Tibial artery (tissue), 4 donors: ENCODE measurements at regions of chr6 and their contacts with region 1.

Region 1: DNA sequence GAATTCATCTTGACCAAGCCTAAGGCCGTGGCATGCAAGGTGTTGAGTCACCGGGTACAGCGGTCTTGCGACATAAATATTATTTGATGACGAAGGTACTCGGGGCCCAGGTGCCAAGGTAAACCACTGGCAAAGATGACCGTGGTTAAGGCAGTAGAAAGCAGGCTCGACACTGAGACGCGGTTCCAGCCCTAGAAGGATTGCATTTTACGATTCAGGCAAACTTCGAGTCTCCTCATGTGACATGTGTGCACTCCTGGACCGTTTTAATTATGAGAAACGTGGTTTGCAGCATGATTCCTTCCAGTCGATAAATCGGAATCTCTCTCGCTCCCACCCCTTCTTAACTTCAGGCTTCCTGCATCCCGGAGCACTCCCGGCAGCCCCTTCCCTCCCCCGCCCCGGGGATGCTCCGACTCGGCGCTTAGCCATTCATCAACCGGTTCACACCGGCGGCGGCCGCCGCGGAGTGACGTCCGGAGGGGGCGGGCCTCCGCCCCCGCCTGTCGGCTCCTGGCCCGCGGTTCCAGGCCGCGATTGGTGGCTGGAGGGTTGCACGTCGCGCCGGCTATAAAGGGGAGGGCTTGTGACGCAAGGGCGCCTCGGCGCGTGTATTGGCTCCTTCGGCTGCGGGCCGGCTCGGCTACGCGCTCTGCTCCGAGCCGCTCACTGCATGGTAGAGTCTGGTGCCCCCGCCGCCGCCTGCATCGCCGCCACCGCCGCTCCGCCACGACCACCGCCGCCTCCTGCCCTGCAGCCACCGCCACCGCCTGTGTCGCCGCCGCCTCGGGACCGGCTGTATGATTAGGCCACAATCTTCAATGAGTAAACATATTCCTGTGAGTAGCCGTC is at the starts of genes LOC128125822 and PTP4A1:
- DNase-seq: peak; percentile 96 to 98
- H3K4me3 ChIP-seq: peak within 1 kb of the TSS; percentile 96 to 100
- H3K27ac ChIP-seq: peak within 1 kb of the TSS; percentile 100
- H3K4me1 ChIP-seq: peaks cover 0 to 22% (median 9%) of the 10 kb centered on the region in 4 donors
- H3K27me3 ChIP-seq: no peaks in the 10 kb centered on the region
- CTCF ChIP-seq: no peak

Region 2: DNA sequence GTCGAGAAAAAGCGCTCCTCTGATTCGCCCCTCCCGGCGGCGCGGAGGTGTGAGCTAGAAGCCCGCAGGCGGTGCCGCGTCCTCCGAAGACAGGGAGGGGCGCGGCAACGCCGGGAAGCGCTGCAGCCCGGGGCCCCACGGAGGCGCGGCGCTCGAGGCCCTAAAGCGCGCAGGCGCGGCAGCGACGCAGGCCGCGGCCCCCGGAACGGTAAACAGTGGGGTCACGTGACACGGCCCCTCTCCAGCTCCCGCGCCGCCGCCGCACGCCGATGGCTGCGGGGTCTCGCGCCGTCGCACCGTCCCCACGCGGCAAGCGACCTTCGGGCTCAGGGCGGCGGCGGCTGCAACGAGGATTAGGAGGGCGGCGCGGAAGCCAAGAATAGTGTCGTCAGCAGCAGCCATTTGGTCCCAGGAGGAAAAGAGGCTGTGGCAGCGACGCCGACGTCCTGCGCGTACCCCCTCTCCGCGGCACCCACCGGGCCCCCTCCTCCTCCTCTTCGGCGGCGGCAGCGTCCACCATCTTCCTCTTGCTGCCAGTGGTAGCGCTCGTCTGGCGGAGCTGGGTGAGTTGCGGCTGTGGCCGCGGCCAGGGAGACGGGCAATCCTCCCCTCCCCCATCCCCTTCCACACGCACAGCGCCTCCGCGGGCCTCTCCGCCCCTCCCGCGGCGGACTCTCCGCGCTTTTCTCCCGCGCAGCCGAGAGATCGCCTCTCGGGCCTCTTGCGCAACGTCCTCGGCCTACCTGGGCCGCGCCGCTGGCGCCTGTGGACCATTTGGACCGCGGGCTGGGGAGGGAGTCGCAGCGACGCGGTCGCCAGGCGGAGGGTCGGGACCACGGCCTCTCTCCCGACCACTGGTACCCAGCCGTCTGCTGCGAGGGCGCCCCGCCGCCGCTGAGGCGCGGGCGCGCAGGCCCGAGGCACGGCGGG is 63.7 kb after region 1 on chr6 and contains the start of gene PHF3:
- intact Hi-C with region 1: loop called (anchors 5 kb)
- DNase-seq: peak; percentile 83 to 93
- H3K4me3 ChIP-seq: peak within 1 kb of the TSS; percentile 75 to 87
- H3K27ac ChIP-seq: peak within 1 kb of the TSS; percentile 92 to 97
- H3K4me1 ChIP-seq: peaks cover 0 to 48% (median 15%) of the 10 kb centered on the region in 4 donors
- H3K27me3 ChIP-seq: no peaks in the 10 kb centered on the region
- CTCF ChIP-seq: peak in 1 of 2 experiments; percentile 5